Naive thymus-derived CD4-positive, alpha-beta T cell (primary cell): ENCODE measurements at regions of chr5 and their contacts with region 1.

Region 1: DNA sequence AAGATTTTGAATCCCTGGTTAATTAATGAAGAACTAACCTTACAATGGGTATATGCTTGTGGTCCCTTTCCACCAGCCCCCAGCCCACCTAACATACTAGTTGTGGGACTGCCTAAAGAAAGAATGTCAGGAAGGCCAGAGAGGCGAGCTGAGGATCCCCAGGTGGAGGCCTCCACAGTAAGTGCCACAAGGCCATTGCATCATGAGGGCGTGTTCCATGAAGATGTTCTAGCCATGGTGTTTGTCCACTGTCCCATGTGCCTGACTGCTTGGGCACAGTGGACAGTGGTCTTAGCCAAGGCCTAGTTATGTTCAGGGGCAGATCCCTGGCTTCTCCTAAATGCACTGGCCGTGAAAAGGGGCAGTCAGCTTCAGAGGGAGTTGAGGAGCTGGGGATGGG is 21.2 kb downstream of the ZFP62 start:
- DNase-seq: no peak
- ATAC-seq: no peak
- H3K4me3 ChIP-seq: no peak overlapping the region
- H3K4me3 Mint-ChIP-seq: no peak overlapping the region
- H3K27ac ChIP-seq: no peak overlapping the region
- H3K27ac Mint-ChIP-seq: no peak overlapping the region
- H3K4me1 ChIP-seq: peaks cover 0 to 4% of the 10 kb centered on the region in 2 donors
- H3K4me1 Mint-ChIP-seq: peaks cover 3 to 23% (median 12%) of the 10 kb centered on the region in 7 donors
- H3K27me3 ChIP-seq: no peaks in the 10 kb centered on the region
- H3K27me3 Mint-ChIP-seq: no peaks in the 10 kb centered on the region

Region 2: GRCh38 chr5:180825768-180826525 is 14.0 kb before region 1 on chr5:
- CTCF ChIA-PET with region 1: interaction called, 3 read pairs
- POLR2A ChIA-PET with region 1: interaction called, 11 read pairs
- intact Hi-C with region 1: no loop called
- DNase-seq: no peak
- ATAC-seq: no peak
- H3K4me3 ChIP-seq: no peak overlapping the region
- H3K4me3 Mint-ChIP-seq: peak overlapping the region in 2 of 10 donors; percentile 8 to 30
- H3K27ac ChIP-seq: no peak overlapping the region
- H3K27ac Mint-ChIP-seq: peak overlapping the region in 4 of 9 donors; percentile 17 to 80 (median 60)
- H3K4me1 ChIP-seq: peaks cover 12 to 14% of the 10 kb centered on the region in 2 donors
- H3K4me1 Mint-ChIP-seq: peaks cover 31 to 58% (median 44%) of the 10 kb centered on the region in 7 donors
- H3K27me3 ChIP-seq: no peaks in the 10 kb centered on the region
- H3K27me3 Mint-ChIP-seq: no peaks in the 10 kb centered on the region